MCF 10A (cell line): ENCODE measurements at regions of chr2 and their contacts with region 1.

Region 1: GRCh38 chr2:40101131-40101575 is 322.1 kb upstream of the THUMPD2 start:
- DNase-seq: no peak
- H3K4me3 Mint-ChIP-seq: no peak overlapping the region
- H3K27ac Mint-ChIP-seq: peak overlapping the region; percentile 82
- H3K4me1 Mint-ChIP-seq: peaks cover 43% of the 10 kb centered on the region
- H3K27me3 Mint-ChIP-seq: no peaks in the 10 kb centered on the region
- CTCF ChIP-seq: no peak

Region 2: DNA sequence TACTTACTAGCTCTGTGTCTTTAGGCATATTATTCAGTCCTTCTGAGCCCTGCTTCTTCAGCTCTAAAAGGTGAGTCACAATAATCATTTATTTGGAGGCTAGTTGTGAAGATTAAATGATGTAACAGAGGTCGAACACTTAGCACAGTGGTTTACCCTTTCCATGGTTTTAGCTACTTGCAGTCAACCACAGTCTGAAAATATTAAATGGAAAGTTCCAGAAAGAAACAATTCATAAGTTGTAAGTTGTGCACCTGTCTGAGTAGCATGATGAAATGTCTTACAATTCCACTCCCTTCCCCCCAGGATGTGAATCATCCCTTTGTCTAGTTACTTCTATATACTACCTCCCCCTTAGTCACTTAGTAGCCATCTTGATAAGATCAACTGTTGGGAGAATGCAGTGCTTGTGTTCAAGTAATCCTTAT is 104.5 kb before region 1 on chr2:
- CTCF ChIA-PET with region 1: no interaction called
- POLR2A ChIA-PET with region 1: no interaction called
- intact Hi-C with region 1: loop called (anchors 5 kb)
- DNase-seq: peak; percentile 76
- H3K4me3 Mint-ChIP-seq: no peak overlapping the region
- H3K27ac Mint-ChIP-seq: peak overlapping the region; percentile 89
- H3K4me1 Mint-ChIP-seq: peaks cover 31% of the 10 kb centered on the region
- H3K27me3 Mint-ChIP-seq: no peaks in the 10 kb centered on the region
- CTCF ChIP-seq: no peak

Region 3: DNA sequence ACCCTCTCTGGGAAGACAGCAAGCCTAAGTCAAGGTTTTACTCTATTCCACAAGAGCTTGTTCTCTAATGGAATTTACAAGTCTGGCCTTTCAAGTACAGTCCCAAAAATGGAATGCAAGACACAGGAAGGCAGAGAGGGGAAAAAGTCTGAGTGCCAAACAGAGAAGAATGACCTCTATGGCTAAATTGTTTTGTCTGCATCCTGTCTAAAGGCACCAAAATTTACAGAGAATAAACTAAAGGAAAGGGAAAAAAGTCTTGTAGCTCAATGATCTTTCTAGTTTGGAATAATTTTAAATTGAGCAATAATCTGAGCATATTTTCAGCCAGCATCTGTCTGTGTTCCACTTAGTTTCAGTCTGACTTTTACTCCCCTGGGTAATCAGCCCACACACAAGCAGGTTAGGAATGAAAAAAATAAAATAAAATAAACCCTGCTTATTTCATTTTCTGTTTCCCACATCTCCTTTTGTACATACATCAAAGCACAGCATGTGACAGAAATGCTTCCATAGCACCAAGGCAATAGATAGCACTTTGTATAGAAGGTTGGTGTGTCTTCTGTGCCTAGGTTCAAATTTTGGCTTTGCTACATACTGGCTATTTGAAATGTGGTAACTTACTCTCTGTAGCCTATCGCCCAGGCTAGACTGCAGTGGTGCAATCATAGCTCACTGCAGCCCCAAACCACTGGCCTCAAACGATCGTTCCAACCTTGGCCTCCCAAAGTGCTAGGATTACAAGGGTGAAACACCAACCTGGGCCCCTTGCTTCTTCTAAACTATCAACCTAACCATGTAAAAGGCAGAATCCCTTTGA is 245.6 kb after region 1 on chr2:
- CTCF ChIA-PET with region 1: no interaction called
- POLR2A ChIA-PET with region 1: no interaction called
- intact Hi-C with region 1: no loop called
- DNase-seq: no peak
- H3K4me3 Mint-ChIP-seq: no peak overlapping the region
- H3K27ac Mint-ChIP-seq: no peak overlapping the region
- H3K4me1 Mint-ChIP-seq: peaks cover 6% of the 10 kb centered on the region
- H3K27me3 Mint-ChIP-seq: no peaks in the 10 kb centered on the region
- CTCF ChIP-seq: no peak